ENCODE measurements at regions of chr17 and their contacts with region 1.

Region 1: DNA sequence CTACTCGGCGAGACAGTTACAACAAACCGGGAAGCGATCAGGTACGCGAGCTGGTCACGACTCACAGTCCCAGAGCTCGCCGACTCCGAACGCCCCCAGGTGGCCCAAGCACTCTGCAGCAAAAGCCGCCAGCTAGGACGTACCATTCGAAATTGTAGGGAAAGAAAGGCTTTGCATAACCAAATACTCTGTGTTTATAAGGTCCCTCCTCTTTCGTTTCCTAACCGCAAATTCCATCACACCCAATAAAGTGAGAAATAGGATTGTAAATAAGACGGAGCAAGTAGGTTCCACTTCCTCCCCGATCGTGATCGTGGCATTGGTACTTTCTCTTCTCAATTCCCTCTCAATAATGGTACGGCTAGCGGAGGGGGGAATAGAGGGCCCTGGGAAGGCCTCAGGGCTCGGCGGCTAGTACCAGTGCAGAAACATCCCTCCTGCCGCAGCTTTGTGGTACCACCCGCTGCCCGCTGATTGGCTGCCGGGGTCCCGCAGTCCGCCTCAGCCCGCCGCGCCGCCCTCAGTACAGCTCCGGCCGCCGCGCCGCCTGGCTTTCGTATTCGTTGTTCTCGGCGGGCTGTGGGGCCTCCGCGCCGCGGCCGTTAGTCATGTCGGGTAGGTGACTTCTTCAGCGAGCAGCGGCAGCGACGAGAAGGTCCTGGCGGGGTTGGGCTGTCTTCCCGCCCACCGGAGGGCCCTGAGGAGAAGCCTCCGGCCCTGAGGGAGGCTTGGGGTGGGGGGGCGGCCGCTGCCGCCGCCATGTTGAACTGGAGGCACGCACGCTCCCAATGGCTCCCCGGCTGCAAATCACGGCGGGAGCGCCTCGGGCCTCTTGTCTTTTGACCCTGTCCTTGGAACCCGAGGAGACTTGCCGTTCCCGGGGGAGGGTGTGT is at the start of gene TAF15:
- DNase-seq: peak; percentile 99
- H3K4me3 Mint-ChIP-seq: peak within 1 kb of the TSS; percentile 92
- H3K27ac Mint-ChIP-seq: peak within 1 kb of the TSS; percentile 89
- H3K4me1 Mint-ChIP-seq: peaks cover 30% of the 10 kb centered on the region
- H3K27me3 Mint-ChIP-seq: no peaks in the 10 kb centered on the region
- CTCF ChIP-seq: peak; percentile 33
- total RNA-seq, gene TAF15: 284 and 337 TPM in 2 replicates

Region 2: GRCh38 chr17:35578197-35578928 is 230.8 kb before region 1 on chr17 and contains the start of gene PEX12:
- CTCF ChIA-PET with region 1: no interaction called
- POLR2A ChIA-PET with region 1: interaction called, 15 read pairs
- intact Hi-C with region 1: no loop called
- DNase-seq: peak; percentile 94
- H3K4me3 Mint-ChIP-seq: peak within 1 kb of the TSS; percentile 89
- H3K27ac Mint-ChIP-seq: peak within 1 kb of the TSS; percentile 92
- H3K4me1 Mint-ChIP-seq: no peaks in the 10 kb centered on the region
- H3K27me3 Mint-ChIP-seq: no peaks in the 10 kb centered on the region
- CTCF ChIP-seq: no peak
- total RNA-seq, gene PEX12: 5.8 and 6.8 TPM in 2 replicates

Region 3: DNA sequence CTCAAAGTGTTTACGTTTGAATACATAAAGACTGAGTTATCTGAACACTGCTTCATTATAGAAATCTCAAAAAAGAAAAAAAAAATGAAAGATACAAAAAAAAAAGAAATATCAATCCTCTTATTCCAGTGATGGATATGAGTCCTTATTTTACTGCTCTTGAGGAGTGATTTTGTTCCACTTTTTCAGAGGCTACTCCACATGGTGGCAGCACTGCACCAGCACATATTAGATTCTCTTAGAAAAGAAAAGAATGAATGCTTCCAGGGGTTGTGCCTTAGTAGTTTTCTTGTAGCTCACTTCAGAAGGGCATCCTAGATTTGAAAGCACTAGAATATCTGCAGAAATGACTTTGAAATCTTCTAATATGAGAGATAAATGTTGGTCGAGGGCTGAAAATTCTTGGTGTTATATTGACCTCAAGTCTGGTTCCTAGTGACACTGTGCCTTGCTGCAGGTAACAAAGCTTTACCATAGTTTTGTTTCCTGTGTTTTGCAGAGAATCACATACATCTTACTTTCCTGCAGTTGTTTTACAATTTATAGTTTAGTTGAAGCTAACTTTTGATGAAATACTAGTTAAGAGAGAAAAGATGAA is 196.2 kb before region 1 on chr17:
- CTCF ChIA-PET with region 1: interaction called, 6 read pairs
- POLR2A ChIA-PET with region 1: interaction called, 5 read pairs
- intact Hi-C with region 1: loop called (anchors 5 kb)
- DNase-seq: peak; percentile 36
- H3K4me3 Mint-ChIP-seq: no peak overlapping the region
- H3K27ac Mint-ChIP-seq: no peak overlapping the region
- H3K4me1 Mint-ChIP-seq: no peaks in the 10 kb centered on the region
- H3K27me3 Mint-ChIP-seq: no peaks in the 10 kb centered on the region
- CTCF ChIP-seq: peak; percentile 48

Region 4: DNA sequence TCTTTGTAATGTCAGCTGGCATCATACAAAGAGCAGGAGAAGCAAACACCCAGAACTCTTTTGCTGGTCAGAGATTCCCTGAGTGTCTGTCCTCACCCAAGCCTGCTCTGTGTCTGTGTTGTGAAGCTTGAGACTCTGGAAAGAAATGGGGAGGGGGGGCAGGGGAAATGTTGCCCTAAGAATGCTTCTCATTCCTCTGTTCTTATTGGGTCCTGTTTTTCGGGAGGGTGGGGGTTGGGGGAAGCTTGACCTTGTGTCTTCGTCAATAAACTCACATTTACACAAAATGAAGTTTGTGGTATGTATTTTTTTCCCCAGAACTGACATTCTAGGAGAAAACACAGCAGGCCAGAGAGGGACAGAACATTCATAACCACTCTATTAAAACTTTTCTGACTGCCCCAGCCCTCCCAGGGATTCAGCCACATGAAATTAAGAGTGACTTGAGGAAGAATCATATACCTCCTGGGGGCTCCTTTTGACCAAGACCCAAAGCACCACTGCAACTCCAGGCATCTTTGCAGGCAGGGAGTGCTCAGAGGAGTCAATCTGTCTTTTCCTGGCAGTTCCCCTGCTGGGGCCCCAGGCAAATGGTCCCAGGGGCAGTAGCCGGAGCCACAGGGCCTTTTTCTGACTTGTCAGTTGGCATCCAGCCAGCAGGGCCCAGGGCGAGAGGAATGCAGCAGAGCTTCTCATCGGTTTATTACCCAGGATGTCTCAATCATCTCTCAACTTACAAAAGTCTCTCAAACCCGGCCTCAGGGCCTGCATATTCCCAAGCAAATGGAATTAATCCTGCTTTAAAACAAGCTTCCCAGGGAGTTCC is 82.9 kb before region 1 on chr17:
- CTCF ChIA-PET with region 1: interaction called, 12 read pairs
- POLR2A ChIA-PET with region 1: interaction called, 4 read pairs
- intact Hi-C with region 1: no loop called
- DNase-seq: peak; percentile 76
- H3K4me3 Mint-ChIP-seq: no peak overlapping the region
- H3K27ac Mint-ChIP-seq: peak overlapping the region; percentile 77
- H3K4me1 Mint-ChIP-seq: peaks cover 25% of the 10 kb centered on the region
- H3K27me3 Mint-ChIP-seq: no peaks in the 10 kb centered on the region
- CTCF ChIP-seq: no peak

Region 5: DNA sequence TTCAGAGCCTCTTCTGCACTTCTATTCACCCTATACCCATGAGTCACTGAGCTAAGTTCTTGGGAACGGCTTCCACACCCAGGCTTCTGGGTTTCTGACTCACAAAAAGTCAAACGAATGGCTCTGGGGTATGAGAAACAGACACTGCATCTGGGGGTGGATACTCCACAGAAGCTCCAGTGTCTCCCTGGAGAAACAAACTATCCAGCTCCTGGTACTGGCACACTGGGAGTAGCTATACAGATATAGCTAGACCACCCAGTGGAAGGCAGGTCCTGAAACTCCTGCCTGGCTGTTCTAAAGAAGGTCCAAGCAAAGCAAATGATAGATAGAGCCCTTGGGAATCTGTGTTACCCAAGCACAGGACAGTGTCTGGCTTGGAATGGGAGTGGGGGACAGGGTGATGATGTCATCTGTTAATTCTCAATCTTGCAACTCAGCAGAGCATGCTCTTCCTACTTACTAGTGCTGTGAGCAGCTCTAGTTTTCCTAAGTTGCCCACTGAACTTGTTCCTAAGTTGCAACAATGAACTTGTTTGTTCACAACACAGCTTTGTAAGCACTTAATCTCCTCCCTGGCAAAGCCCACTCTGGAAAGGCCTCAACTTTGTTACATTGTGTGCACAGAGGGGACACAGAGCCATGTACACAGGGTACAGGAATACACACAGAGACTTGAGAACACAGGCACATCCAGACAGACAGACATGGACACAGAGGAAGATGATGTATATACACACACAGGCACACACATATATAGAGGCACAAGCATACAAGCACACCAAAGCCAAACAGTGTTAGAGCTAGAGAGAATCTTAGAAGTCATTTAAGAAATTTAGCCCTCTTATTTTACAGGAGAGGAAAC is 20.5 kb before region 1 on chr17:
- CTCF ChIA-PET with region 1: interaction called, 48 read pairs
- POLR2A ChIA-PET with region 1: interaction called, 489 read pairs
- intact Hi-C with region 1: no loop called
- DNase-seq: peak; percentile 95
- H3K4me3 Mint-ChIP-seq: peak overlapping the region; percentile 52
- H3K27ac Mint-ChIP-seq: peak overlapping the region; percentile 85
- H3K4me1 Mint-ChIP-seq: peaks cover 59% of the 10 kb centered on the region
- H3K27me3 Mint-ChIP-seq: no peaks in the 10 kb centered on the region
- CTCF ChIP-seq: no peak

Region 6: DNA sequence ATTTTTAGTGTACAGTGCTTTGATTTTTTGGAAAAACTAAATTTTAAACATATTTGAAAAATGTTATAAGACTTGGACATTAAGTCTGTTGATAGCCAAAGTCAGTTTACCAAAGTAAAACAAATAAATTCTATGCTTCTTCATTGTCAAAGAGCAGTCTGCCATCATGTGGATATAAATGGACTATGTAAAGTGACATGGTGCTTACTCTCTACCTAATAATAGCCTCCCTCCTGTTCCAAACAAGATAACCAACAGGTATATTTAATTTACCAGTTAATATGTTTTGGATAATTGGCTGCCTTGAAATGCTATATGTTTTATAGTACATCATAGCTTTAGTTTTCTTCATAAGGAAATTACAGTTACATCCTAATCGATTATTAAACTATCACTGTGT is 16.0 kb after region 1 on chr17:
- CTCF ChIA-PET with region 1: interaction called, 8 read pairs
- POLR2A ChIA-PET with region 1: interaction called, 56 read pairs
- intact Hi-C with region 1: no loop called
- DNase-seq: no peak
- H3K4me3 Mint-ChIP-seq: no peak overlapping the region
- H3K27ac Mint-ChIP-seq: no peak overlapping the region
- H3K4me1 Mint-ChIP-seq: peaks cover 6% of the 10 kb centered on the region
- H3K27me3 Mint-ChIP-seq: no peaks in the 10 kb centered on the region
- CTCF ChIP-seq: no peak